ENCODE measurements at regions of chr2 and their contacts with region 1.

Region 1: GRCh38 chr2:102240640-102241370 is 54.0 kb downstream of the IL1RL2 start:
- DNase-seq: peak; percentile 80
- ATAC-seq: peak; percentile 99
- H3K4me3 ChIP-seq: no peak overlapping the region
- H3K27ac ChIP-seq: no peak overlapping the region
- H3K4me1 ChIP-seq: peaks cover 0 to 15% of the 10 kb centered on the region in 2 experiments; a peak in 3 of 4 replicates
- H3K27me3 ChIP-seq: no peaks in the 10 kb centered on the region
- CTCF ChIP-seq: peak; percentile 90 to 98 (median 96)
- POLR2A ChIP-seq: no peak
- RAD21 ChIP-seq: peak; percentile 95

Region 2: DNA sequence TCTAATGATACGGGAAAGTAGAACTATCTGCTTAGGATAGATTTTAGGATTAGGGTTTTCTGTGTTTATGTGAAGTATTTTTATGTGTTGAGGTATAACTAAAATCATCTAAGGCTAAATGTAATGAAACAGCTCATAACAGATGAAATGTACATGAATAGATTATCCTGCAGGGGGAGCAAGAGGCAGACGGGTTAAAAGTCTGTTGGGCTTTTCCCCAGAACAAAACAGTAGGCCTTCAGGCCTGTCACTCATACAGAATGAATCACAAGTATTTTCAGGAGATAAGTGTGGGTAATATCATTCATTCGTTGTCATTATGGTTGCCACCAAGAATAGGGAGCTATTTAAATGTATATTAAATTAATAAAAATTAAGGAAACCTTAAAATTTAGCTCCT is 356.9 kb before region 1 on chr2:
- CTCF ChIA-PET with region 1: interaction called, 35 read pairs
- POLR2A ChIA-PET with region 1: interaction called, 3 read pairs
- RAD21 ChIA-PET with region 1: interaction called in 1 of 2 experiments, 4 read pairs
- intact Hi-C with region 1: loop called (anchors 5 kb)
- DNase-seq: peak; percentile 8
- ATAC-seq: peak; percentile 78
- H3K4me3 ChIP-seq: no peak overlapping the region
- H3K27ac ChIP-seq: no peak overlapping the region
- H3K4me1 ChIP-seq: no peaks in the 10 kb centered on the region
- H3K27me3 ChIP-seq: no peaks in the 10 kb centered on the region
- CTCF ChIP-seq: peak; percentile 41 to 67 (median 61); a peak in 5 of 6 replicates
- POLR2A ChIP-seq: no peak
- RAD21 ChIP-seq: peak; percentile 47

Region 3: DNA sequence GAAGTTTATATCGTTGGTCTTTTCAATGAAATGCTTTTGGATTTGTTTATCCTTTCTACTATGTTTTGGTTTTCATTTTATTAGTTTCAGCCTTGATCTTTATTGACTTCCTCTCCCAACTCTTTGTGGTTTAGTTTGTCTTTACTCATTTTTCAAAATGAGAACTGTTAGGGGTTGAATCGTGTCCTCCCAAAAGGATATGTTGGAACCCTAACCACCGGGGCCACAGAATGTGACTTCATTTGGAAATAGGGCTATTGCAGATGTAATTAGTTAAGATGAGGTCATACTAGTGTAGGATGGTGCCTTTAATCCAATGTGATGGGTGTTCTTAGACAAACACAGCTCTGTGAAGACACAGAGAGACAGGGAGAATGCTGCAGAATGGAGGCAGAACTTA is 309.4 kb before region 1 on chr2:
- CTCF ChIA-PET with region 1: no interaction called
- POLR2A ChIA-PET with region 1: no interaction called
- RAD21 ChIA-PET with region 1: no interaction called
- intact Hi-C with region 1: no loop called
- DNase-seq: no peak
- ATAC-seq: no peak
- H3K4me3 ChIP-seq: no peak overlapping the region
- H3K27ac ChIP-seq: no peak overlapping the region
- H3K4me1 ChIP-seq: no peaks in the 10 kb centered on the region
- H3K27me3 ChIP-seq: no peaks in the 10 kb centered on the region
- CTCF ChIP-seq: no peak
- POLR2A ChIP-seq: no peak
- RAD21 ChIP-seq: no peak

Region 4: DNA sequence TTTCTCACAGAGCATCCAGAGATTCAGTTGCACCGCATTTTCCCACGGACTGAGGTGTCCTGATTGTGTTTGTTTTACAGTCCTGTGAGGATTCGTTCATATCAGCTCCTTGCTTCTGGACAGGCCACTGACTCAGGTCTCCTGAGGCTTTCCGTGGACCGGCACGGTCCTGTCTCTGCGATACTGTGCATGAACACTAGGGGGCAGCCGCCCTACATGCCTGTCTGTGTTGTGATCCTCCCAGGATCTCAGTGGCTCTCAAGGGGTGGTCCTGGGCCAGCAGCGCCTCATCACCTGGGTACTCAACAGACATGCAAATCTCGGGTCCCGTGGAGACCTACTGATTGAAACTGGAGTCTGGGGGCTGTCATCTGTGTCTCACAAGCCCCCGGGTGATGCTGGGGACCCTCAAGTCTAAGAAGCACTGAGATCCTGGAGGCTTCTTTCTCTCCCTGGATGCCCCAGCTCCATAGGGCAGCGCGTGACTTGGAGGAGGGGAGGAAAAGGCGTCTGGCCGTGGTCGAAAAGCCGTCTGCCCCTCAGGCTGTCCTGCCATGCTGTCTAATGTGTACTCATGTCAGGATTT is 220.1 kb before region 1 on chr2:
- CTCF ChIA-PET with region 1: interaction called, 76 read pairs
- POLR2A ChIA-PET with region 1: interaction called, 6 read pairs
- RAD21 ChIA-PET with region 1: interaction called, 15 to 16 read pairs
- intact Hi-C with region 1: loop called (anchors 1 kb)
- DNase-seq: peak; percentile 61
- ATAC-seq: peak; percentile 99
- H3K4me3 ChIP-seq: no peak overlapping the region
- H3K27ac ChIP-seq: no peak overlapping the region
- H3K4me1 ChIP-seq: no peaks in the 10 kb centered on the region
- H3K27me3 ChIP-seq: no peaks in the 10 kb centered on the region
- CTCF ChIP-seq: peak; percentile 89 to 98 (median 97)
- POLR2A ChIP-seq: no peak
- RAD21 ChIP-seq: peak; percentile 97

Region 5: DNA sequence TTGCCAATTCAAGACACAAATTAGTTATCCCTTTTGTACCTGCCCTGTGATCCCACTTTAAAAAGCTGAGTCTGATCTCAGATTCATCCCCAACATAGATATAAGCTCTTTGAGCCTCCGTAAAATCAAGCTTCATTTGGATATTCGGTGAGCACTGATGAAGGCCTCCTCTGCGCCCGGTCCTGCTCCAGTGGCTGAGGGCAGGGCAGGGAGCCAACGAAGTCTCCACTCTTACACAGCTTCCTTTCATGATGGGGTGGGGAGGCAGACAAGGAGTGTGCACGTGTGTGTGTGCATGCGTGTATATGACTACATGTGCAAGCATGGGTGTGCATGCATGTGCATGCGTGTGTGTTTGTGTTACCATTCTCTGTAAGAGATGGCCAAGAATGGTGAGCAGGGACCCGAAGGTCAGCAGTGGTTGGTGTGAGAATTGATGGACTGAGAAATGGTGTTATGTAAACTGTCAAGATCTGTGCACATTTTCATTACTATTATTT is 10.3 kb before region 1 on chr2:
- CTCF ChIA-PET with region 1: interaction called, 12 read pairs
- POLR2A ChIA-PET with region 1: interaction called, 3 read pairs
- RAD21 ChIA-PET with region 1: no interaction called
- intact Hi-C with region 1: no loop called
- DNase-seq: no peak
- ATAC-seq: no peak
- H3K4me3 ChIP-seq: no peak overlapping the region
- H3K27ac ChIP-seq: no peak overlapping the region
- H3K4me1 ChIP-seq: peaks cover 15 to 26% of the 10 kb centered on the region in 2 experiments
- H3K27me3 ChIP-seq: no peaks in the 10 kb centered on the region
- CTCF ChIP-seq: no peak
- POLR2A ChIP-seq: no peak
- RAD21 ChIP-seq: no peak

Region 6: GRCh38 chr2:102399499-102400141 is 158.8 kb after region 1 on chr2:
- CTCF ChIA-PET with region 1: no interaction called
- POLR2A ChIA-PET with region 1: no interaction called
- RAD21 ChIA-PET with region 1: no interaction called
- intact Hi-C with region 1: no loop called
- DNase-seq: no peak
- ATAC-seq: no peak
- H3K4me3 ChIP-seq: no peak overlapping the region
- H3K27ac ChIP-seq: no peak overlapping the region
- H3K4me1 ChIP-seq: no peaks in the 10 kb centered on the region
- H3K27me3 ChIP-seq: no peaks in the 10 kb centered on the region
- CTCF ChIP-seq: no peak
- POLR2A ChIP-seq: no peak
- RAD21 ChIP-seq: no peak

Region 7: GRCh38 chr2:102615622-102616436 is 375.0 kb after region 1 on chr2:
- CTCF ChIA-PET with region 1: no interaction called
- POLR2A ChIA-PET with region 1: no interaction called
- RAD21 ChIA-PET with region 1: no interaction called
- intact Hi-C with region 1: loop called (anchors 5 kb)
- DNase-seq: peak; percentile 35
- ATAC-seq: peak; percentile 78
- H3K4me3 ChIP-seq: no peak overlapping the region
- H3K27ac ChIP-seq: no peak overlapping the region
- H3K4me1 ChIP-seq: peaks cover 8 to 15% of the 10 kb centered on the region in 2 experiments; a peak in 2 of 4 replicates
- H3K27me3 ChIP-seq: no peaks in the 10 kb centered on the region
- CTCF ChIP-seq: peak; percentile 81 to 97 (median 92)
- POLR2A ChIP-seq: no peak
- RAD21 ChIP-seq: peak; percentile 75

Region 8: DNA sequence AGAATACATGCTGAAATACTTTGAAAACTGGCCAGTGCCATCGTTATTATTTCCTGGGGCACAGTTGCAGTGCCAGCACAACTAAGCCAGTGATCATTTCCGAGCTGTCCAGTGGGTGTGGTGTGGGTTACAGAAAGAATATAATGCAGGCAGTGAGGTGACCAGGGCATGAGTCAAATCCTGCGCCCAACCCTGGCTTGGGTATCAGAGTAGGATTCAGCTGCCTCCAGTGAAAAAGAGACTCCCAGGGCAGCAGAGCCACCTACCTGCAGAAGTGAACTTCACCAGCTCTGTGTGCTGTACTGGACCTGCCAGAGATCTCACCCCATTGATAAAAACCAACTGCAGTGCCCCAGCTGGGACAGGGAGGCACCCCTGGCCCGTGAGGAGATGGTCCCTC is 396.6 kb after region 1 on chr2:
- CTCF ChIA-PET with region 1: no interaction called
- POLR2A ChIA-PET with region 1: no interaction called
- RAD21 ChIA-PET with region 1: no interaction called
- intact Hi-C with region 1: no loop called
- DNase-seq: no peak
- ATAC-seq: peak; percentile 46; the same call in 1 of the 2 replicates
- H3K4me3 ChIP-seq: no peak overlapping the region
- H3K27ac ChIP-seq: no peak overlapping the region
- H3K4me1 ChIP-seq: peaks cover 0 to 4% of the 10 kb centered on the region in 2 experiments; a peak in 1 of 4 replicates
- H3K27me3 ChIP-seq: 0 out of 2 replicates have a peak, but pooled peaks cover 5% of the 10 kb centered on the region
- CTCF ChIP-seq: no peak
- POLR2A ChIP-seq: no peak
- RAD21 ChIP-seq: peak; percentile 35; the same call in 1 of the 2 replicates

Measured in HCT116 (cell line).